ENCODE measurements at regions of chr17 and their contacts with region 1.

Region 1: GRCh38 chr17:40490289-40490853 is 11.1 kb downstream of the TNS4 start:
- DNase-seq: peak; percentile 65
- ATAC-seq: peak; percentile 55
- H3K4me3 Mint-ChIP-seq: no peak overlapping the region
- H3K27ac Mint-ChIP-seq: peak overlapping the region; percentile 61
- H3K4me1 Mint-ChIP-seq: peaks cover 56% of the 10 kb centered on the region
- H3K27me3 Mint-ChIP-seq: no peaks in the 10 kb centered on the region

Region 2: DNA sequence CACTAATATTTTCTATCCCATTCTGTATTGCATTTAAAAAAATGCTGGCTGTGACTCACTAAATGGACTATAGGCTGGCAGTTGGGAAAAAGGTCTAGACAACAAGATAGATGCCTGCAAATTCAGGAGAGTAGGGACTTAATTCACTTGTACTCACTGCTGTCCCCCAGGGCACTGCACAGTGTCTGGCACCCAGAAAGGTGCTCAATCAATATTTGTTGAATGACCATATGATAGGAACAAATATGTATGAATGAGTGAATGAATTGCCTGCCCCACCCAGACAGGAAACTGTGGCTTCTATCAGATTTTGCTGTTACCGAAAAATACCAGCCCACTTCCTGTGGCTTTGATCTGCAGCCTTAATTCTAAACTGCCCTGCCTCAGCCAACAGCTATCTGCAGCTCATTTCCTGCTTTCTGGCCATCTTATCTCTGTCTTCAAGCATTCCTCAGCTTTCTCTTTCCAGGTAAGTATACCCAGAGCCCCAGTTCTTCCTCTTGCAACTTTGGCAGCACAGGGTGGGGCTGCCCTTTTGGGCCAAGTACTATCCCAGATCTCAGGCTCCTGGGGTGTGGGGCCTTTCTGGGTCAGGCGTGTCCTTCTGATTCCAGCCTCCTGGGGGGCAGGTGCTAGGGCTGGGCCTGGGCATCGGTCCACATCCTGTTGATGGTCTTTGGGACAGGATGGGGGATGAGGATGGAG is 26.4 kb after region 1 on chr17:
- CTCF ChIA-PET with region 1: interaction called, 4 read pairs
- POLR2A ChIA-PET with region 1: no interaction called
- intact Hi-C with region 1: loop called in 1 of 2 experiments (anchors 1 kb)
- DNase-seq: peak; percentile 77
- ATAC-seq: peak; percentile 76
- H3K4me3 Mint-ChIP-seq: peak overlapping the region; percentile 76
- H3K27ac Mint-ChIP-seq: peak overlapping the region; percentile 73
- H3K4me1 Mint-ChIP-seq: peaks cover 57% of the 10 kb centered on the region
- H3K27me3 Mint-ChIP-seq: peaks cover 2% of the 10 kb centered on the region

Region 3: GRCh38 chr17:40588552-40588951 is 98.2 kb after region 1 on chr17:
- CTCF ChIA-PET with region 1: no interaction called
- POLR2A ChIA-PET with region 1: no interaction called
- intact Hi-C with region 1: no loop called
- DNase-seq: no peak
- ATAC-seq: no peak
- H3K4me3 Mint-ChIP-seq: peak overlapping the region; percentile 2
- H3K27ac Mint-ChIP-seq: peak overlapping the region; percentile 71
- H3K4me1 Mint-ChIP-seq: peaks cover 73% of the 10 kb centered on the region
- H3K27me3 Mint-ChIP-seq: no peaks in the 10 kb centered on the region

Measured in activated CD4-positive, alpha-beta T cell treated with anti-CD3 and anti-CD28 coated beads for 36 hours (primary cell).